ENCODE measurements at regions of chr2 and their contacts with region 1.

Region 1: GRCh38 chr2:157363612-157364101 is 38.0 kb upstream of the ERMN start:
- DNase-seq: no peak
- H3K4me3 Mint-ChIP-seq: no peak overlapping the region
- H3K27ac Mint-ChIP-seq: no peak overlapping the region
- H3K4me1 Mint-ChIP-seq: peaks cover 19% of the 10 kb centered on the region
- H3K27me3 Mint-ChIP-seq: no peaks in the 10 kb centered on the region

Region 2: GRCh38 chr2:157386247-157386646 is 22.6 kb after region 1 on chr2:
- intact Hi-C with region 1: loop called (anchors 1 kb)
- DNase-seq: no peak
- H3K4me3 Mint-ChIP-seq: no peak overlapping the region
- H3K27ac Mint-ChIP-seq: no peak overlapping the region
- H3K4me1 Mint-ChIP-seq: peaks cover 6% of the 10 kb centered on the region
- H3K27me3 Mint-ChIP-seq: no peaks in the 10 kb centered on the region